Gastrocnemius medialis (tissue), 4 donors: ENCODE measurements at regions of chr14 and their contacts with region 1.

Region 1: DNA sequence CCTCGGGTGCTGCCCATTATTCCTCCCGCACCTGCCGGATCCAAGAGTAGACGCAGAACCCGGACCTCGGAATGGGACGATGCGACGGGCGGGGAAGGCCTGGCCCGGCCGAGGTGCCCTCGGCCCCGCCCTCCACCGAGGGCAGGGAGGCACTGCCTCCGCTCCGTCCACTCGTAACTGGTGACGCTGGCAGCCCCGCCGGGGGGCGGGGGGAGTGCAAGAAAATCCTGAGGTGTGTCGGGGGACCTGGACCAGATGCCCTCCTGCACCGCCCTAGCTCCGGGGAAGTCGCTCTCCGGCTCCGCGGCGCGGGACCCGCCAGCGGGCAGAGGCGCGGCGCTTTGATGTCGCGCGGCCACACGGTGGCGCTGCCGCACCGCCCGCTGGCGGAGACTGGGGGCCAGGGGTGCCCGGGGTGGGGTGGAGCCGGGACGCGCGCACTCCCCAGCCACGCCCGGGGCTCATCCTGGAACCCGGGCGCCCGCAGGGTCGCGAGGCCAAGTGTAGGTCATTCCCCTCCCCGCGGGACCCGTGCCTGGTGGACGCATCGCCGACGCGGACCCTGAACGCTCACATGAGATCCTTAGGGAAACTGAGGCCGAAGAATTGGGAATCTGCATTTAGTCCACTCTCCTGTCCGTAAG is 202.8 kb downstream of the TTC8 start:
- DNase-seq: peak in 1 of 2 donors; percentile 20
- ATAC-seq: peak; percentile 78 to 83
- H3K4me3 ChIP-seq: peak overlapping the region; percentile 49 to 85 (median 54)
- H3K27ac ChIP-seq: no peak overlapping the region
- H3K4me1 ChIP-seq: no peaks in the 10 kb centered on the region
- H3K27me3 ChIP-seq: peaks cover 4 to 35% (median 19%) of the 10 kb centered on the region in 3 donors
- CTCF ChIP-seq: peak; percentile 73 to 98 (median 89)
- POLR2A ChIP-seq: no peak

Region 2: DNA sequence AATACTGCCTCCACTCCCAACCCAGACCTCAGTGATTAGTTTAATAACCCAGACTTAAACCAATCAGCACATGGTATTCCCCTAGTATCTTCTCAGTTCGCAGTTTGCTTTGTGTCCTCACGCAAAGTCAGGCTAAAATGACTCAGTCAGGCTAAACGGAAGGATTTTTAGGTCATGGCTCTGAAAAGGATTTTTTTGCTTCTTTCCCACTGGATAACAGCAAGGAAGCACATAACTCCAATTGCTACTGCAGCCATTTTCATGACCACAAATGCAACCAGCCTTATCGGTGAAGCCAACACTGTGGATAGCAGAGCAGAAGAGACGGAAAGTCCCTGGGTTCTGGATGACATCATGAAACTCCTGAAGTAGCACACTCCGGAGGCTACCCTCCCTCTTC is 396.7 kb before region 1 on chr14:
- in situ Hi-C with region 1: no loop called
- intact Hi-C with region 1: no loop called
- DNase-seq: no peak
- ATAC-seq: no peak
- H3K4me3 ChIP-seq: no peak overlapping the region
- H3K27ac ChIP-seq: no peak overlapping the region
- H3K4me1 ChIP-seq: no peaks in the 10 kb centered on the region
- H3K27me3 ChIP-seq: no peaks in the 10 kb centered on the region
- CTCF ChIP-seq: no peak
- POLR2A ChIP-seq: no peak

Region 3: GRCh38 chr14:89237921-89238529 is 210.8 kb after region 1 on chr14:
- in situ Hi-C with region 1: loop called in 2 of 4 experiments (anchors 10 to 25 kb)
- intact Hi-C with region 1: no loop called
- DNase-seq: no peak
- ATAC-seq: peak in 1 of 2 donors; percentile 55
- H3K4me3 ChIP-seq: no peak overlapping the region
- H3K27ac ChIP-seq: no peak overlapping the region
- H3K4me1 ChIP-seq: peaks cover 12 to 32% of the 10 kb centered on the region in 2 donors
- H3K27me3 ChIP-seq: no peaks in the 10 kb centered on the region
- CTCF ChIP-seq: peak; percentile 13 to 53 (median 52)
- POLR2A ChIP-seq: no peak

Region 4: DNA sequence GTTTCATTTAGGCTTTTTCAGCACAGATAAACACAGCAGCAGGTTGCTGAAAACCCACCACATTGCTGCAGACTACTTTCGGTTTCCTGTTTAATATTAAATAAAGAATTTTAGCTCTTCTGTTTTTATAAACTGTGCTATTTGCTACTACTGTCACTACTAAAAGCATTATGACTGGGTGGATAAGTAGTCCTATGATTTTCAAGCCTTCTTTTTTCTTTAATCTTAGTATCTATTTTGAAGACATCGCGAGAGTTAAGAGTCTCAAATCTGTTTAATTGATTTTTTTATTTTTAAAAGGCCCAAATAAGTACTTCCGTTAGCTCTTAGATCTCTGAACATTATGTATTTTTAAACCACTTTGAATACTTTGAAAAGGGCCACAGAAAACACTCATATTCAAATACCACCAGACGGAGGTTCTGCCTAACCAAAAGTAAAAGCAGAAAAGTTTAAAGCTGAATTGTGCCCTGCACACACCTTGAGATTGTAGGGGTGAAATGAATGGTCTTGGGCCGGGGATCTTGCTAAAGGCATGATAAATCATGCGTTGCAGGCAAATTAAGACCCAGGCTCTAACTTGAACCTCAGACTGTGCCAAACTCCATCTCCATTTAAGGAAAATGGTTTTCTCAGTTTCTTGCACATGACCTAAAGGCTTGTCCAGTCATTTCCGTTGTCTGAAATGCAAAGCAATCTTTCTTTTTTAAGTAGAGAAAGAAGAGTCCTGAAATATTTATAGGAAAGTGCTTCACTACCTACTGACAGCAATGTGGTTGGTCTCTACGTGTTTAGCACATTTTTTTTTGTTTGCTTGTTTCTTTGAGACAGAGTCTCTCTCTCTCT is 403.4 kb after region 1 on chr14:
- in situ Hi-C with region 1: loop called in 1 of 4 experiments (anchors 10 kb)
- intact Hi-C with region 1: no loop called
- DNase-seq: no peak
- ATAC-seq: no peak
- H3K4me3 ChIP-seq: peak overlapping the region; percentile 14 to 43 (median 34)
- H3K27ac ChIP-seq: peak overlapping the region; percentile 71 to 79 (median 74)
- H3K4me1 ChIP-seq: peaks cover 48 to 56% of the 10 kb centered on the region in 2 donors
- H3K27me3 ChIP-seq: no peaks in the 10 kb centered on the region
- CTCF ChIP-seq: no peak
- POLR2A ChIP-seq: peak in 1 of 2 donors; percentile 10